ENCODE measurements at regions of chr2 and their contacts with region 1.

Region 1: DNA sequence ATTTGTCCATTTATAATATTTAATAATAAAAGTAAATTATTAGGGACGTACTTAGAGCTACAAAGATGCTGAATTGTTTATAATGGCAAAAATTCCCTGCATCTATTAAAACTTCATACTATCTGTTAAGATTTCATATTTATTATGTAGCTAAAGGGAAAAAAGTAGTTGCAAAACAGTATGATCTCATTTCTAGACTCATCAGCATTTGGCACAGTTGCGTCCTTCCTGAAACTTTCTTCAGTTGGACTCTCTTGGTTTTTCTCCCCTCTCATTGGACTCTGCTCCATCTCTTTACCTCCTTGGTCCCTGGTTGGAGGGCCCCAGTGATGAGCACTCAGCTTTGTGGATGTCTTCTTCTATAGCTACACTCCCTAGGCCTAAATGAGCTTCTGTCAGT is 99.6 kb downstream of the TMEM247 start:
- DNase-seq: no peak
- H3K4me3 ChIP-seq: no peak overlapping the region
- H3K27ac ChIP-seq: no peak overlapping the region
- H3K4me1 ChIP-seq: no peaks in the 10 kb centered on the region
- H3K27me3 ChIP-seq: no peaks in the 10 kb centered on the region
- CTCF ChIP-seq: no peak

Region 2: DNA sequence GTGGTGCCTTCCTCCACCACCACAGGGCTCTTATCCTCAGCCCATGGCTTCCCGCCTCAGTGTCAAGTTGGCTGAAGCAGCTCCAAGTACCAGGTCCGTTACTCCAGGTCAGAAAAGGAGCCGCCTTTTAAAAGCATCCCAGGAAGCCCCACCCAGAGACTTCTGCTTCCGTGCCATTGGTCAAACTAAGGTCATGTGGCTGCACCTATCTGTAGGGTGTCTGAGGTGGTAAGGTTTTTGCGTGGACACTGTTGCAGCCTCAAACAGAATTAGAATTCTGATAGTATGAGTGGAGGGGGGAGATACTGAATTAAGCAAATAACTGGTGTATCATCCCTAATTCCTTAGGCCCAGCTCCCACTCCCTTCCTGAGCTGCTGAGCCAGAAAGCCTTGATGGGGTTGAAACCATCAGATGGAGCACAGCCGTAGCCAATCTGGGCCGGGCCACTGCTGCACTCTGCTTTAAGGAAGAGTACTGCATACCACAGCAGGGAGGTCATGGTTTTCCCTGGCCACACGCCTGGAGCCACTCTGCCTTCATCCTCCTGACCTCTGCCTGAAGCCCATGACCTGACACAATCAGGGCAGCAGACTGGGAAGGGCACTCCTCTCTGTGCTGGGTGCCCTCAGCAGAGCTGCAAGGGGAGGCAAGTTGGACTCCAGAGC is 91.2 kb before region 1 on chr2:
- CTCF ChIA-PET with region 1: interaction called, 11 read pairs
- POLR2A ChIA-PET with region 1: no interaction called
- intact Hi-C with region 1: no loop called
- DNase-seq: peak; percentile 57 to 67
- H3K4me3 ChIP-seq: no peak overlapping the region
- H3K27ac ChIP-seq: no peak overlapping the region
- H3K4me1 ChIP-seq: peaks cover 8% of the 10 kb centered on the region
- H3K27me3 ChIP-seq: no peaks in the 10 kb centered on the region
- CTCF ChIP-seq: no peak

Measured in PC-9 (cell line).